ENCODE measurements at regions of chr1 and their contacts with region 1.

Region 1: GRCh38 chr1:205523891-205524793 is 19.7 kb downstream of the CDK18 start:
- DNase-seq: peak; percentile 71 to 87
- ATAC-seq: peak; percentile 65 to 81
- H3K4me3 ChIP-seq: no peak overlapping the region
- H3K27ac ChIP-seq: no peak overlapping the region
- H3K4me1 ChIP-seq: 0 out of 3 replicates have a peak, but pooled peaks cover 6% of the 10 kb centered on the region
- CTCF ChIP-seq: peak; percentile 91
- EP300 ChIP-seq: no peak
- POLR2A ChIP-seq: no peak
- RAD21 ChIP-seq: peak; percentile 95

Region 2: DNA sequence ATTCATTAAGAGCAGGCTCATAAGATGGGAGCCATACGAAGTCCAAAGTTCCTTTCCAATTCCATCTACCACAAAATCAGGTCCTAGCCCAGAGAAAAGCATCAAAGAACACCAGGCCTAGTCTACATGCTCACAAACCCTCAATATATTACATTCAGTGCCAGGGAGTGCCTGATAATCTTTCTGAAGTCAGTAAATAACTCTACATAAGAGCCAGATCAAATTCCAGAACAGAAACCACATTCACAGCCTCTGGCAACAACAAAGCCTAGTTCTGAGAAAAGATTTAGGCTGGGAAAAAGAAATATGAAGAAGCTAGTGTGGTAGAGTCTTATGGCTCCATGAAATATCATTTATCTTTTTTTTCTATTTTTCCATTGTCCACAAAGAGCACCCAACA is 361.8 kb before region 1 on chr1:
- CTCF ChIA-PET with region 1: no interaction called
- POLR2A ChIA-PET with region 1: no interaction called
- DNase-seq: no peak
- ATAC-seq: no peak
- H3K4me3 ChIP-seq: no peak overlapping the region
- H3K27ac ChIP-seq: no peak overlapping the region
- H3K4me1 ChIP-seq: no peaks in the 10 kb centered on the region
- CTCF ChIP-seq: no peak
- EP300 ChIP-seq: no peak
- POLR2A ChIP-seq: no peak
- RAD21 ChIP-seq: no peak

Region 3: GRCh38 chr1:205287767-205288559 is 236.2 kb before region 1 on chr1:
- CTCF ChIA-PET with region 1: no interaction called
- POLR2A ChIA-PET with region 1: no interaction called
- DNase-seq: no peak
- ATAC-seq: no peak
- H3K4me3 ChIP-seq: no peak overlapping the region
- H3K27ac ChIP-seq: peak overlapping the region; percentile 99 to 100
- H3K4me1 ChIP-seq: peaks cover 72% of the 10 kb centered on the region
- CTCF ChIP-seq: no peak
- EP300 ChIP-seq: no peak
- POLR2A ChIP-seq: no peak
- RAD21 ChIP-seq: no peak

Region 4: GRCh38 chr1:205321164-205321958 is 202.8 kb before region 1 on chr1 and contains the start of gene NUAK2:
- CTCF ChIA-PET with region 1: interaction called, 44 read pairs
- POLR2A ChIA-PET with region 1: no interaction called
- DNase-seq: peak; percentile 92 to 95
- ATAC-seq: peak; percentile 70 to 85
- H3K4me3 ChIP-seq: peak within 1 kb of the TSS; percentile 95
- H3K27ac ChIP-seq: peak within 1 kb of the TSS; percentile 96 to 99
- H3K4me1 ChIP-seq: peaks cover 41% of the 10 kb centered on the region
- CTCF ChIP-seq: no peak; the same call in 2 of the 3 replicates
- EP300 ChIP-seq: no peak
- POLR2A ChIP-seq: peak; percentile 99
- RAD21 ChIP-seq: peak; percentile 6 to 9; a peak in 2 of 5 replicates
- polyA plus RNA-seq, gene NUAK2: 22.6 and 29.7 TPM in 2 replicates

Region 5: DNA sequence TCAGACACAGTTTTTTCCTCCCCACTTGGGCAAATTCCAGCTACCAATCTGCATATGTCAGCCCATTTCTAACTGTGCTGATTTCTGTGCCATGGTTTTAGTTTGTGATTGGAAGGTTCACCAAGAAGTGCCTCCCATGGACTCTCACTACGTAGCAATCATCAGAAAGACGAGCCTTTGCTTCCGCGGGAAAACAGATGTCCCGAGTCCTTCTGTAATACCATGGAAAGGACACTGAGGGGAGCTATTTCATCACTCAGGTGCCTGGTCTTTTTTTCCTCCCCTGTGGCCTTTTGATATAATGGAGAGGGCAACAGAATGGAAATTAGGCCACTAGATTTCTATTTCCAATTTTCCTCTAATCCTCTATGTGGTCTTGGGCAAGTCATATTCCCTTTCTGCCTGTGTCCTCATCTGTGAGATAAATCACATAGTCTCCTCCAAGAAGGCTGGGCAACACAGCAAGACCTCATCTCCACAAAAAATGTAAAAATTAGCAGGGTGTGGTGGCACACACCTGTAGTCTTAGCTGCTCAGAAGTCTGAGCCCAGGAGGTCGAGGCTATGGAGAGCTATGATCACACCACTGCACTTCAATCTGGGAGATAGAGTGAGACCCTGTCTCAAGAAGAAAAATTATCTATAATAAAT is 127.0 kb before region 1 on chr1:
- CTCF ChIA-PET with region 1: interaction called, 142 read pairs
- POLR2A ChIA-PET with region 1: no interaction called
- DNase-seq: peak; percentile 61 to 67
- ATAC-seq: peak; percentile 68 to 85; a peak in 5 of 6 replicates
- H3K4me3 ChIP-seq: no peak overlapping the region
- H3K27ac ChIP-seq: no peak overlapping the region
- H3K4me1 ChIP-seq: no peaks in the 10 kb centered on the region
- CTCF ChIP-seq: peak; percentile 71
- EP300 ChIP-seq: no peak
- POLR2A ChIP-seq: no peak
- RAD21 ChIP-seq: peak; percentile 81 to 89

Region 6: DNA sequence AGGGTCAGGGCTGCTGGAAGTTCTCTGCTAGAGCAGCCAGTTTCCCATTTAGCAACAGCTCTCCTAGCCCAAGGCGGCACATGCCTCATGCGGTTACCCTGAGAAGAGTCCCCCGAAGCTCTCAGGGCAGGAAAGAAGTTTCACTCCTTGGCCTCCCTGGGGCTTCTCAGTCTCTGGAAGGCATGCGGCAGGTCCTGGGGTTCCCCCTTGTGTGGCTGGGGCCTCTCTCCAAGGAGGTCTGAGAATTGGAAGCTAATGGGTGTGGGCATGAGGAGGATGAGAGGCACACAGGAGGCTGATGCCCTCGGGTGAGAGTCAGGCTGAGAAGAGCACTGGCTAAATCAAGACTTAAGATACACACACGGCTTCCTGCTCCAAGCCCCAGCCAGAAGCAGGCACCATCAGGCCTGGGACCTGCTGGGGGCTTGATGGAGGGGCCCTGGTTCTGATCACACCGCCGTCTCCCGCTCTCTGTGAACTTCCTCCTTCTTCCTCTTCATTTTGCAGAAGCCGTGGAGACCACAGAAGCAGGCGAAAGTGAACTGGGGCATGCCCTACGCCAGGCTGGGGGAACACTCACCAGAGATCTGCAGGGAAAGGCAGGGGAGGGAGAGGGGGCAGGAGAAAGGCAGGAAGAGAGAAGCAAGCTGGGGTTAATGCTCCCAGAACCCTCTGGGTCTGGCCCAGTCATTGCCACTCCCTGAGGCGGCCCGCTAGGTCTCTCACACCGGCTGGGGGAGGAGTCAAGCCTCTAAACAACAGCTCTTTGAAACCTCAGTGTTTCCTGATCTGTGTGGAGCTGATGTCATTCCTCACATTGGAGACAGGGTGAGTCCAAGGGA is 83.4 kb before region 1 on chr1:
- CTCF ChIA-PET with region 1: interaction called, 15 read pairs
- POLR2A ChIA-PET with region 1: no interaction called
- DNase-seq: peak in 1 of 2 experiments; percentile 53
- ATAC-seq: peak; percentile 31 to 50; a peak in 5 of 6 replicates
- H3K4me3 ChIP-seq: no peak overlapping the region
- H3K27ac ChIP-seq: peak overlapping the region in 1 of 2 experiments; percentile 24; a peak in 2 of 6 replicates
- H3K4me1 ChIP-seq: peaks cover 16% of the 10 kb centered on the region
- CTCF ChIP-seq: no peak
- EP300 ChIP-seq: no peak
- POLR2A ChIP-seq: no peak
- RAD21 ChIP-seq: no peak

Region 7: GRCh38 chr1:205504311-205504984 is 19.7 kb before region 1 on chr1 and contains the start of gene CDK18:
- CTCF ChIA-PET with region 1: interaction called, 560 read pairs
- POLR2A ChIA-PET with region 1: interaction called, 4 read pairs
- DNase-seq: peak in 1 of 2 experiments; percentile 83
- ATAC-seq: peak; percentile 58 to 87; a peak in 5 of 6 replicates
- H3K4me3 ChIP-seq: peak within 1 kb of the TSS; percentile 65
- H3K27ac ChIP-seq: peak within 1 kb of the TSS; percentile 72 to 83
- H3K4me1 ChIP-seq: peaks cover 6% of the 10 kb centered on the region; the same call in 1 of the 3 replicates
- CTCF ChIP-seq: no peak
- EP300 ChIP-seq: no peak
- POLR2A ChIP-seq: no peak
- RAD21 ChIP-seq: no peak
- polyA plus RNA-seq, gene CDK18: 0.75 and 1.3 TPM in 2 replicates

Region 8: DNA sequence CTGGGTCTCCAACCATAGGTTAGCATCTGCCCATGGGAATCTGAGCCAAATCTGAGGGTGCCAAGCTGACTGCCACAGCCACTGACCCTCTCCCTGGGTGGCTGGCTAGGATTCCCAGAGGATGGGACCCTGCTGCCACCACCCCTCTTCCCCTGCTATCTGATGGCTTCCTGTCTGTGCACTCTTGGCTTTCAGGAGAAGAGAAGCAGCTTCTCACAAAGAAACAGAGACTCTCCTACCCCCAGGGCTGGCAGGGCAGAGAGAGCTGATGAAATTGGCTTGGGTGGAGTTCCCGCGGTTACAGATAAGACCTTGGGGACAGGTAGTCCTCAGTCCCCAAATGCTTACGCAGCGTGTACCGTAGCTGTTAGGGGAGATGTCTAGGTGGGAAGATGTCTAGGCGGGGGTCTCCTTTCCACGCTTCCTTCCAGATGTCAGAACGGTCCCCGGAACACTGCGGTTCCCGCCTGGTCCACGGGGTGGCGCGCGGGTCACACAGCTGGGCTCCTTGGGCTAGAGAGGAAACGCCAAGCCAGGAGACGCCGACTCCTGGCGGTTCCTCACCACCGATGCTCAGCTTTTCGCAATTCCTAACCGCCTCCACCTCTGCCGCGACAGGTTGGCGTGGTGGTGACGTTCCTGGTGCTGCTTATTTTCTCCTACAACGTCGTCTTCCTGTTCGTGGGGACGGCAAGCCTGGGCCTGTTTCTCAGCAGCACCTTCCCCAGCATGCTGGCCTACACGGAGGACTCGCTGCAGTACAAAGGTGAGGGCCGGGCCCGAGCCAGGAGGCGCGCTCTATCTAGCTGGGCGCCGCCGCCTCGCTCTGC is 67.6 kb after region 1 on chr1:
- CTCF ChIA-PET with region 1: interaction called, 19 read pairs
- POLR2A ChIA-PET with region 1: no interaction called
- DNase-seq: peak; percentile 81 to 89
- ATAC-seq: peak; percentile 92
- H3K4me3 ChIP-seq: peak overlapping the region; percentile 37
- H3K27ac ChIP-seq: peak overlapping the region; percentile 64 to 72
- H3K4me1 ChIP-seq: peaks cover 3% of the 10 kb centered on the region; the same call in 1 of the 3 replicates
- CTCF ChIP-seq: peak; percentile 95
- EP300 ChIP-seq: no peak
- POLR2A ChIP-seq: no peak
- RAD21 ChIP-seq: peak; percentile 97 to 98